Naive thymus-derived CD8-positive, alpha-beta T cell (primary cell): ENCODE measurements at regions of chr11 and their contacts with region 1.

Region 1: GRCh38 chr11:119306373-119306890 is 10.5 kb downstream of the MCAM start:
- DNase-seq: peak in 8 of 10 donors; percentile 60 to 87 (median 78)
- ATAC-seq: peak; percentile 93 to 97
- H3K4me3 Mint-ChIP-seq: peak overlapping the region; percentile 66 to 89 (median 81)
- H3K27ac Mint-ChIP-seq: peak overlapping the region; percentile 92 to 100 (median 99)
- H3K4me1 Mint-ChIP-seq: peaks cover 22 to 41% (median 31%) of the 10 kb centered on the region in 4 donors
- H3K27me3 Mint-ChIP-seq: no peaks in the 10 kb centered on the region

Region 2: GRCh38 chr11:119284344-119285157 is 21.9 kb before region 1 on chr11:
- POLR2A ChIA-PET with region 1: interaction called, 10 read pairs
- DNase-seq: peak in 7 of 10 donors; percentile 4 to 72 (median 41)
- ATAC-seq: peak; percentile 95 to 98
- H3K4me3 Mint-ChIP-seq: peak overlapping the region in 3 of 10 donors; percentile 1 to 22 (median 9)
- H3K27ac Mint-ChIP-seq: peak overlapping the region in 9 of 10 donors; percentile 33 to 86 (median 74)
- H3K4me1 Mint-ChIP-seq: peaks cover 23 to 36% (median 29%) of the 10 kb centered on the region in 4 donors
- H3K27me3 Mint-ChIP-seq: no peaks in the 10 kb centered on the region

Region 3: DNA sequence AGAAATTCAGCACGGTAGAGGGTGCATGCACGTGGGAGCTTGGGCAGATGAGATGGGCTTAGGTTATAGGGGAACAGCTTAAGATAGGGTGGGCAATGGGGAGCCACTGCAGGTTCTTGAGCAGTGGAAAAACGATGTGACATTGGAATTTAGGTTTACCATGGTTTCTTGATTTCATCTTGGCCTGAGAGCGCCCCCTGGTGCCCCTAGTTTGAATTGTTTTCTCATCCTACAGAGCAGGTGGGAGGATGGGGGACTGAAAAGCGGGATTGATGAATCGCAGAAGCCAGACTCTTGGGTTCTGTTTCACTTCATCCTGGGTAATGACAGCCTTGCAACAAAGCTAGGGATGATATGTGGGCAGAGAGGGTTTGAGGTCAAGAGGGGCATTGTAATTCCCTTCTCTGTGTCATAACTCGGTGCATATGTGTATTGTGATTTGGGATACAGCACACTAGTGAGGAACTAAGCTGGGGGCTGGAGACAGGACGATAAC is 17.2 kb after region 1 on chr11:
- POLR2A ChIA-PET with region 1: interaction called, 138 read pairs
- DNase-seq: peak; percentile 62 to 89 (median 78)
- ATAC-seq: peak; percentile 12 to 21
- H3K4me3 Mint-ChIP-seq: peak overlapping the region in 6 of 10 donors; percentile 2 to 71 (median 38)
- H3K27ac Mint-ChIP-seq: peak overlapping the region in 2 of 10 donors; percentile 0 to 43
- H3K4me1 Mint-ChIP-seq: peaks cover 17 to 33% (median 24%) of the 10 kb centered on the region in 4 donors
- H3K27me3 Mint-ChIP-seq: peaks cover 1 to 8% (median 8%) of the 10 kb centered on the region in 5 donors